Heart right ventricle (tissue), 16 donors: ENCODE measurements at regions of chr5 and their contacts with region 1.

Region 1: GRCh38 chr5:59799668-59800346 is 93.7 kb downstream of the PDE4D start:
- DNase-seq: no peak
- ATAC-seq: peak in 7 of 8 donors; percentile 65 to 83 (median 75)
- H3K4me3 ChIP-seq: peak overlapping the region in 5 of 10 donors; percentile 2 to 30 (median 11)
- H3K27ac ChIP-seq: peak overlapping the region in 7 of 10 donors; percentile 1 to 43 (median 23)
- H3K4me1 ChIP-seq: peaks cover 0 to 28% (median 15%) of the 10 kb centered on the region in 9 donors
- H3K27me3 ChIP-seq: no peaks in the 10 kb centered on the region
- CTCF ChIP-seq: peak; percentile 57 to 86 (median 80)

Region 2: GRCh38 chr5:59506285-59506877 is 293.4 kb before region 1 on chr5:
- intact Hi-C with region 1: loop called in 8 of 10 experiments (anchors 2 to 10 kb)
- DNase-seq: no peak
- ATAC-seq: no peak
- H3K4me3 ChIP-seq: no peak overlapping the region
- H3K27ac ChIP-seq: no peak overlapping the region
- H3K4me1 ChIP-seq: no peaks in the 10 kb centered on the region
- H3K27me3 ChIP-seq: no peaks in the 10 kb centered on the region
- CTCF ChIP-seq: peak; percentile 28 to 78 (median 58)

Region 3: GRCh38 chr5:59587489-59588337 is 212.1 kb before region 1 on chr5:
- intact Hi-C with region 1: no loop called
- DNase-seq: peak; percentile 43
- ATAC-seq: peak in 7 of 8 donors; percentile 52 to 98 (median 88)
- H3K4me3 ChIP-seq: peak overlapping the region in 9 of 10 donors; percentile 5 to 50 (median 41)
- H3K27ac ChIP-seq: no peak overlapping the region
- H3K4me1 ChIP-seq: peaks cover 0 to 15% (median 8%) of the 10 kb centered on the region in 9 donors
- H3K27me3 ChIP-seq: no peaks in the 10 kb centered on the region
- CTCF ChIP-seq: peak in 4 of 9 donors; percentile 7 to 33 (median 16)